ENCODE measurements at regions of chr6 and their contacts with region 1.

Region 1: GRCh38 chr6:6901205-6901731 is 206.5 kb upstream of the RREB1 start:
- DNase-seq: no peak
- H3K4me3 ChIP-seq: no peak overlapping the region
- H3K27ac ChIP-seq: no peak overlapping the region
- H3K4me1 ChIP-seq: peaks cover 0 to 5% (median 0%) of the 10 kb centered on the region in 4 experiments; a peak in 2 of 7 replicates
- H3K27me3 ChIP-seq: no peaks in the 10 kb centered on the region
- CTCF ChIP-seq: no peak
- EP300 ChIP-seq: no peak
- POLR2A ChIP-seq: no peak
- RAD21 ChIP-seq: no peak

Region 2: GRCh38 chr6:6915813-6916547 is 14.7 kb after region 1 on chr6:
- CTCF ChIA-PET with region 1: interaction called, 12 read pairs
- POLR2A ChIA-PET with region 1: no interaction called
- DNase-seq: no peak
- H3K4me3 ChIP-seq: no peak overlapping the region
- H3K27ac ChIP-seq: no peak overlapping the region
- H3K4me1 ChIP-seq: no peaks in the 10 kb centered on the region; a peak in 1 of 7 replicates
- H3K27me3 ChIP-seq: no peaks in the 10 kb centered on the region; a peak in 1 of 7 replicates
- CTCF ChIP-seq: no peak
- EP300 ChIP-seq: no peak
- POLR2A ChIP-seq: no peak
- RAD21 ChIP-seq: no peak